ENCODE measurements at regions of chr2 and their contacts with region 1.

Region 1: GRCh38 chr2:77479895-77480294 is 42.3 kb downstream of the LRRTM4 start:
- DNase-seq: no peak
- H3K4me3 ChIP-seq: no peak overlapping the region
- H3K27ac ChIP-seq: no peak overlapping the region
- H3K4me1 ChIP-seq: no peaks in the 10 kb centered on the region
- H3K27me3 ChIP-seq: no peaks in the 10 kb centered on the region
- CTCF ChIP-seq: no peak
- EP300 ChIP-seq: no peak
- POLR2A ChIP-seq: no peak
- RAD21 ChIP-seq: no peak

Region 2: GRCh38 chr2:77469106-77469505 is 10.8 kb before region 1 on chr2:
- CTCF ChIA-PET with region 1: interaction called, 12 read pairs
- POLR2A ChIA-PET with region 1: no interaction called
- DNase-seq: no peak
- H3K4me3 ChIP-seq: no peak overlapping the region
- H3K27ac ChIP-seq: no peak overlapping the region
- H3K4me1 ChIP-seq: no peaks in the 10 kb centered on the region
- H3K27me3 ChIP-seq: no peaks in the 10 kb centered on the region
- CTCF ChIP-seq: no peak
- EP300 ChIP-seq: no peak
- POLR2A ChIP-seq: no peak
- RAD21 ChIP-seq: no peak

Region 3: GRCh38 chr2:77767388-77768076 is 287.6 kb after region 1 on chr2:
- CTCF ChIA-PET with region 1: no interaction called
- POLR2A ChIA-PET with region 1: no interaction called
- DNase-seq: no peak
- H3K4me3 ChIP-seq: no peak overlapping the region
- H3K27ac ChIP-seq: no peak overlapping the region
- H3K4me1 ChIP-seq: no peaks in the 10 kb centered on the region
- H3K27me3 ChIP-seq: no peaks in the 10 kb centered on the region
- CTCF ChIP-seq: no peak
- EP300 ChIP-seq: no peak
- POLR2A ChIP-seq: no peak
- RAD21 ChIP-seq: no peak